GM10248 (cell line): ENCODE measurements at regions of chr2 and their contacts with region 1.

Region 1: GRCh38 chr2:159140070-159140769 is 146.3 kb downstream of the WDSUB1 start:
- DNase-seq: no peak
- CTCF ChIP-seq: no peak

Region 2: DNA sequence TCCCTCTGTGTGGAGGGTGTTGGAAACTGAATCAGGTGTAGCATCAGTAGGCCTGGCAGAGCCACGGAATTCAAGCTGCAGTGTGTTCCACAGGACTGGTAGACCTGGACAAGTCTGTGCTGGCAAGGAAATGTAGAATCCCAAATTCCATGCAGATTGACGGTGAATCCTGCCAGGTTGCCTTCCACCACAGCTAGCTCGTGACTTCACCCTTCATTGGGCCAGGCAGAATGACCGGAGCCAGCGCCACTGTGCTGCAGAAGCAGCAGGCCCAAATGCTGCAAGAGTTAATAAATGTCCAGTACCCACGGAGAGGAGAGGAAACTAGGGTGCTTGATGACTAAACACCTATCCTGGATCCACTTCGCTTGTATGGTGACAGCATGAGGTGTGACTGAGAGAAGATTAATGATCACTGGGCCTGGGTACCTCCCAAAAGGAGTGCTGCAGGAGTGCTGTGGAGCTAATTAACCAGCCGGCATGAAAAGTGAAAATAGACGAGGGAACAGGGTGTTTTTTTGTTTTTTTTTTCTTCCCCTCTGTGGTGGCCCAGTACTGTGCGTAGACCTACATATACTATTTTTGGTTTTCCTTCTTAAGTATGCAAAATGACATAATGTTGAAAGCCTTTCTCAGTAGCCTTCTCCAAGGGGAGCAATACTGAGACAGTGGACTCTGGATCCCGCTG is 49.6 kb before region 1 on chr2:
- CTCF ChIA-PET with region 1: no interaction called
- POLR2A ChIA-PET with region 1: no interaction called
- DNase-seq: peak; percentile 27
- CTCF ChIP-seq: no peak

Region 3: GRCh38 chr2:159111346-159111924 is 28.8 kb before region 1 on chr2:
- CTCF ChIA-PET with region 1: no interaction called
- POLR2A ChIA-PET with region 1: no interaction called
- DNase-seq: no peak
- CTCF ChIP-seq: no peak

Region 4: DNA sequence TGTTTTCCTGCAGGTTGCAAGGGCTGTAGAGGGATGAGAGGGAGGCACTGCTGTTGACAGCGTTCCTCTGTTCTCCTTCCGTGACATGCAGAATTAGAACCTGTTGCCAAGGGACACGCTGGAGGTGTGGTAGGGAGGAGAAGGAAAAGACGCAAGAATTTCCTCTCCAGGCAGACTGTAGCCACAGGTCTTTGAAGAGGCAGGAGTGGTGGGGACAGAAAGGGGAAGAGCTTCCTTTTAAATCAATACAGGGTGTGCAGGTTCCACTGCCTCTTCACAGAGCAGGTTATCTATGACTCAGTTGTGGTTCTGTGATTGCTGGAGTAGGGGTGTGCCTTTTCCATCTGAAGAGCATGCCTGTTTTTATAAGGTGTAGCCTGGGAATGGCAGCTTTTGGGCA is 13.2 kb after region 1 on chr2:
- CTCF ChIA-PET with region 1: interaction called, 15 read pairs
- POLR2A ChIA-PET with region 1: no interaction called
- DNase-seq: no peak
- CTCF ChIP-seq: no peak